Breast epithelium (tissue), 4 donors: ENCODE measurements at regions of chr1 and their contacts with region 1.

Region 1: DNA sequence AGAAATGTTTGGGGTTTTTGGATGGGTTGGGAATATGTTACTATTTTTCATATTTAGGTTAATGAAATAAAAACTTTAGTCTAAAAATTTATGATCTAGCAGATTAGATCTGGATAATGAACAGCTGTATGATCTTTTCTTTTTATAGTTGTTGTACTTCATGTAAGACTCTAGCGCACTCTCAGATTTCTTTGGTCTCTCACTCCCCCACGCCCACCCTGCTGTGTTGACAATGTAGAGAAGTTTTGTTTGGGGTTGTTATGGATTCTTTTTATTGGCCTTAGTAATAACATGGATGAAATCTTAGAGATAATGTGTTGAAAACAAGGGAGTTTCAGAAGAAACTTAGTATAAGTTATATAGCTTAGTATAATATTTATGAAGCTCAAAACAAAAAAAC is 5.5 kb downstream of the KLF18 start:
- DNase-seq: no peak
- H3K4me3 ChIP-seq: no peak overlapping the region
- H3K27ac ChIP-seq: no peak overlapping the region
- H3K4me1 ChIP-seq: no peaks in the 10 kb centered on the region
- H3K27me3 ChIP-seq: no peaks in the 10 kb centered on the region
- CTCF ChIP-seq: no peak
- POLR2A ChIP-seq: no peak

Region 2: DNA sequence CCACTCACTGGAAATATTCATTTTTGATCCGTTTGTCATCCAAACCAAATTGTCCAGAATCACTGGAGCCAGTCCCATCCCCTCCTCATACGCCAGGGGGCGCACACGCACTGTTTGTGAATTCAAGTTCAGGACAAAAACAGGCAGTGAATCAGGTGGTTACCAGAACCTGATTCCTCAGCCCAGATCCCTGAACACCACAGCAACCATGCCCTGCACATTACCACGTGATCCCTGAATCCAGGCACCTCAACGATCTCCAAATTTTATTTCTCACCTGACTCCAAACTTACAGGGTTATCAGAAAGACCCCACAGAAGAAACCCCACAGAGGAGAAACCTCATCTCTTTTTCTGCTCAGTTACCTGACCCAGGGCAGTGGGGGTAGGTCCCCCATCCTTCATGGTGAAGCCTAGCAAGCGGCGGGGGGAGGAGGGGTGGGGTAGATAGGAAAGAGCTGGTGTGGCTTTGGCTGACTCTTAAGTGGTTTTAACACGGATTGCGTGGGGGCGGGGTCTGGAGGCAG is 606.6 kb before region 1 on chr1:
- intact Hi-C with region 1: no loop called
- DNase-seq: peak; percentile 79 to 87
- H3K4me3 ChIP-seq: no peak overlapping the region
- H3K27ac ChIP-seq: no peak overlapping the region
- H3K4me1 ChIP-seq: peaks cover 0 to 8% of the 10 kb centered on the region in 2 donors
- H3K27me3 ChIP-seq: no peaks in the 10 kb centered on the region
- CTCF ChIP-seq: peak; percentile 96 to 98 (median 96)
- POLR2A ChIP-seq: no peak

Region 3: DNA sequence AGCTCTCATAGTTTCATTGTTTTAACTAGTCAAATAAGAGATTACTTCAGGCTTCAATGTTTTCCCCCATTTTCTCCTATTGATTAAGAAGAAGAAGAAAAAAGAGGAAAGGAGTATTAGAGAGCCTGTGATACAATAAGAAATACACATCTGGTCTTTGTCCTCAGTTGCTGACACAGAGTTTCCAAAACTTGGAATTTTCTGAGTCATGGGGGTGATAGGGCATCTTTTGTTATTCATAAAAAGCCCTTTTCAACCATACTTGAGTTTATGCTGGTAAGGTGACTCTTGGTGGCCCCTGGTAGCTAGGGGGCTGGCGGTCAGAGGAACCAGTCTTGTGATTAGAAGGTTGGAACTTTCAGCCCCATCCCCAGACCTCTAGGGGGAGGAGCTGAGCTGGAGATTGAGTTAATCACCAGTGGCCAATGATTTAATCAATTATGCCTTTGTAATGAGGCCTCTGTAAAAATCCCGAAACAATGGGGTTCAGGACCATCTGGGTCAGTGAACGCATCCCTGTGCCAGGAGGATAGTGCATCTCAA is 34.5 kb after region 1 on chr1:
- intact Hi-C with region 1: loop called (anchors 2 kb)
- DNase-seq: no peak
- H3K4me3 ChIP-seq: no peak overlapping the region
- H3K27ac ChIP-seq: no peak overlapping the region
- H3K4me1 ChIP-seq: no peaks in the 10 kb centered on the region
- H3K27me3 ChIP-seq: no peaks in the 10 kb centered on the region
- CTCF ChIP-seq: no peak
- POLR2A ChIP-seq: no peak